BJ (cell line): ENCODE measurements at regions of chr19 and their contacts with region 1.

Region 1: GRCh38 chr19:29528350-29528945 is 2.7 kb downstream of the VSTM2B start:
- DNase-seq: no peak
- H3K4me3 ChIP-seq: peak overlapping the region; percentile 28
- H3K27me3 ChIP-seq: peaks cover 49% of the 10 kb centered on the region
- CTCF ChIP-seq: peak; percentile 83

Region 2: GRCh38 chr19:29139227-29139626 is 389.2 kb before region 1 on chr19:
- CTCF ChIA-PET with region 1: no interaction called
- POLR2A ChIA-PET with region 1: no interaction called
- DNase-seq: no peak
- H3K4me3 ChIP-seq: no peak overlapping the region
- H3K27me3 ChIP-seq: no peaks in the 10 kb centered on the region
- CTCF ChIP-seq: no peak

Region 3: DNA sequence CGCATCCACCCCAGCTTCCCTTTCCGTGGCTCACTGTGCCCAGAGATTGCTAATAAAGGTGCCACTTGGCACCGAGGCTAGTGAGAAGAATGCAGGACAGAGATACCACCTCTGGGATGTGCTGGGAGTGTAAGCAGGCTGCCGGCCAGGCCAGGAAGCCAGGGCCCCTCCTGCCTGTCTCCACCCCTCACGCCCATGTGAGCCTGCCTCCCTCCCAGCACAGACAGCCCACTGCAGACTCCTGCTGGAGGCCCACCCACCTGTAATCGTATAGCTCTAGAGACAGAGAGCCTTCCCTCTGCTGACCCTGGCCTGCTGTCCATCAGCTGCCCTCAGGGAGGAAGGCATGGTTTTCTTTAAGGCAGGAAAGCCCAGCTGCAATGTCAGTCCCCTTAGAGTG is 11.2 kb after region 1 on chr19:
- CTCF ChIA-PET with region 1: interaction called, 16 read pairs
- POLR2A ChIA-PET with region 1: no interaction called
- DNase-seq: no peak
- H3K4me3 ChIP-seq: no peak overlapping the region
- H3K27me3 ChIP-seq: no peaks in the 10 kb centered on the region
- CTCF ChIP-seq: no peak

Region 4: DNA sequence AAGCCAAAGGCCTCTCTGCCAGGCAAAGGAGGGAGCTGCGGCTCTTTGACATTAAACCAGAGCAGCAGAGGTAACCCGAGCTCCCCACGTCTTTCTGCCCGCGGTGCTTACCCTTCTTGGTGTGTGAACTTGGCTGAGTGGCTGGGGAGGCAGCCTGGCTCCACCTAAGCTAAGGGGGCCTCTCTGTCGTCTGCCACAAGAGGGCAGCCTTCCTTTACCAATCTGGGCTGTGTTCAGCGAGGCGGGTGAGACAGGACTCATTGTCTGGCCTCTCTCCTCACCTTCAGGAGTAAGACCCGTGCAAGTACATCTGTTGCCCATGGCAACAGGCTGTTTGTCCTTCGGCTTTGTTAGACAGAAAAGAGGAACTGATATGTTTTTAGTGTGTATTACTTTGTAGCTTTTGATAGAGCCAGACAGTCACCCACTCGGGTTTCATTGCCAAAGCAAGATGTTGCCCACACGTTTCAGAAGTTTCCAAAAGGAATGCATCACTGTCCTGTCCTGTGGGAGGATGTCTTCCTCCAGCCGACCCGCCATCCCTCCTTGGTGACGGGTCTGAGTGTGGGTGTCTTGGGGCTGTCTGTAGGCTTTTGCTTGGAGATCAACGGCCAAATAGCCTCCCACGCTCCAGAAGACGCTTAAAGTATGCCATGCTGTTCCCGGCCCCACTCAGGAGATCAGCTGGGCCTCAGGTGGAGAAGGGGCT is 82.3 kb after region 1 on chr19:
- CTCF ChIA-PET with region 1: no interaction called
- POLR2A ChIA-PET with region 1: no interaction called
- DNase-seq: no peak
- H3K4me3 ChIP-seq: no peak overlapping the region
- H3K27me3 ChIP-seq: no peaks in the 10 kb centered on the region
- CTCF ChIP-seq: peak; percentile 93